ENCODE measurements at regions of chr6 and their contacts with region 1.

Region 1: DNA sequence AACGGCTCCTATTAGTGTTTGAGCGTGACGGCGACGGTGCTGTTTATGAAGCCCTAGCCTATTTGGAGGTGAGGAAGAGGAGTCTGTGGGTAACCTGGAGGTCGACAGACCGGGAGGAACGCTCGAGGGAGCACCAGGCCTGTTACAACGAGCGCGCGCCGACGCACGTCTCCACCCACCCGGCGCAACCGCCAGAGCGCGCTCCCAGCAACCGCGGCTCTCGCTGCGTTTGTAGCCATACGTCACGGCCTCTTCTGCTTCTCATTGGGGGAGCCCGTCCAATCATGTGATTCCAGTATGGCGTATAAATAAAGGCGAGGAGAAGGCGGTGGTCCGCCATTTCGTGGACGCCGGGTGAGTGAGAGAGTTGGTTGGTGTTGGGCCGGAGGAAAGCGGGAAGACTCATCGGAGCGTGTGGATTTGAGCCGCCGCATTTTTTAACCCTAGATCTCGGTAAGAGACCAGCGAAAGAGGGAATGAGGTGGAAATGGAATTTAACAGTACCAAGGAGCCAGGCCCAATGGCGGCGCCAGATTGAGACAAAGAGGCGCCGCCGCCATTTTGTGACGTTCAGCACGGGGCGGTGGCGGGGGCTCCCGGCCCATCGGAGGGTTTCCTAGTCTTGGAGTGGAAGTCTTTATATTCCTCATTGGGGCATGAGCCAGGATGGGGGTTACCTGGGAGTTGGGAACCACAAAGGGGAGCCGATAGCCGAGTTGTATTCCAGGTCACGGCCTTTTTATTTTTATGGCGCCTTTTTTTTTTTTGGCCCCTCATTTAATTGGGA is at the start of gene SRSF3:
- DNase-seq: peak; percentile 96
- H3K4me3 Mint-ChIP-seq: peak within 1 kb of the TSS; percentile 96
- H3K27ac Mint-ChIP-seq: peak within 1 kb of the TSS; percentile 99
- H3K4me1 Mint-ChIP-seq: peaks cover 26% of the 10 kb centered on the region
- H3K27me3 Mint-ChIP-seq: no peaks in the 10 kb centered on the region
- total RNA-seq, gene SRSF3: 512 and 541 TPM in 2 replicates

Region 2: DNA sequence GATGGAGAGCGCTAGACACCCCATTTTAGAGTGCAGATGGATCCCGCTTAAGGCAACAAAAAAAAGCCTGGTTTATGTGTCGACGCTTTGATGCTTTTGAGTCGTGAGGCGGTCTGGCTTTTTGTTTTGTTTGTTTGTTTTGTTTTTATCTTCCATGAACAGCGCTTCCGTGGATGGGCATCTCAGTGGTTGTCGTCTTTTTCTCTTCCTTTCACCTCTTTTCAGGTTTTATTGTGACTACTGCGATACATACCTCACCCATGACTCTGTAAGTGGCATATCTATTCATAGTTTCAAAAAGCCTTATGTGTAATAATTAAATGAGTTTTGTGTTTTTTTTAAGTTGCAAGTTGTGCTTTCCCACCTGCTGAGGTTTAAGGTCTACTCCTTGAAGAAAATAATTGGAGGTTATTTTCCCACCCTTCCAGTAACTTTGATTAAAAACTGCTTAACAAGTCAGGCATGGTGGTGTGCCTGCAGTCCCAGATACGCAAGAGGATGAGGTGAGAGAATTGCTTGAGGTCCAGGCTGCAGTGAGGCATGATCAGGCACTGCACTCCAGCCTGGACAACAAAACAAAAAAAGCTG is 1836.4 kb before region 1 on chr6:
- intact Hi-C with region 1: loop called (anchors 10 kb)
- DNase-seq: no peak
- H3K4me3 Mint-ChIP-seq: no peak overlapping the region
- H3K27ac Mint-ChIP-seq: no peak overlapping the region
- H3K4me1 Mint-ChIP-seq: peaks cover 8% of the 10 kb centered on the region
- H3K27me3 Mint-ChIP-seq: no peaks in the 10 kb centered on the region

Region 3: GRCh38 chr6:36423101-36423824 is 171.0 kb before region 1 on chr6:
- intact Hi-C with region 1: loop called (anchors 5 kb)
- DNase-seq: peak; percentile 97
- H3K4me3 Mint-ChIP-seq: peak overlapping the region; percentile 88
- H3K27ac Mint-ChIP-seq: peak overlapping the region; percentile 85
- H3K4me1 Mint-ChIP-seq: peaks cover 15% of the 10 kb centered on the region
- H3K27me3 Mint-ChIP-seq: peaks cover 7% of the 10 kb centered on the region

Region 4: DNA sequence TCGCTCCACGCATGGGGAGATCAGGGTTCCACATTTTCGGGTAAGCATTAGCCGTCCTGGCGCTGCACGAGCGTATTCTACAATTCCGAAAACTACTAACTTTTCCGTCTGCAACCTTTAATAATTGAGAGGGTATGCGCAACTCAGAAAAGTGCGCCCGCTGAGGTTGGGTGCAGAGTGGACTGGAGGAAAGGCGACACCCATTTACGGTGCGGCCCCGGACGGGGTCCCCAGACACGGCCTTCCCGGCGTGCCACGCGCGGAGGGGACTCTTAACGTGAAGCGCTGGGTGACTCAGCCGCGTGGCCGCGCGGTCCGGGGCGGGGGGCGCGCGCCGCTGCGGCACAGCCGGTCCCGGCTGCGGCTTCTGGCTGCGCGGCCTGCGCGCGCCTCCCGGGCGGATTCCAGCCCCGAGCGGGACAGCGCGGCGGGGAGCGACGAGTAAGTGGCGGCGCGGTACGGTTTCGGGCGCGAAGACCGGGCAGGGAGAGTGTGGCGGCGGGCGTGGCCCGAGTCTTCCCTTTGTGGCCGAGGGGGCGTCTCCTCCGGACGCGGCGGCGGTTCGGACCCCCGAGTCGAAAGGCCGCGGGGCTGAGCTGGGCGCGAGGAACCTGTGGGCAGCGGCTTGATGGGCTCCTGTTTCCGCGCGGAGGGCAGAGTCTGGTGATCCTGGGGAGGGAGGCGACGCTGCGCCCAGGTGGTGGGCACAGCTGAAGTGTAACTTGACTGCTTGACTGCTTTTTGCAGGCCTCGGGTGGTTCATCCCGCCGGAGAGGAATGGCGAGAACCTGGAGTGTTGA is 151.4 kb before region 1 on chr6 and contains the starts of genes KCTD20 and PXT1:
- intact Hi-C with region 1: loop called (anchors 2 kb)
- DNase-seq: peak; percentile 84
- H3K4me3 Mint-ChIP-seq: peak within 1 kb of the TSS; percentile 93
- H3K27ac Mint-ChIP-seq: peak within 1 kb of the TSS; percentile 97
- H3K4me1 Mint-ChIP-seq: peaks cover 30% of the 10 kb centered on the region
- H3K27me3 Mint-ChIP-seq: no peaks in the 10 kb centered on the region
- total RNA-seq, gene KCTD20: 51.1 and 54.8 TPM in 2 replicates
- total RNA-seq, gene PXT1: 0.14 and 0.27 TPM in 2 replicates

Region 5: GRCh38 chr6:36546920-36547645 is 47.1 kb before region 1 on chr6 and contains the start of gene STK38:
- intact Hi-C with region 1: loop called (anchors 1 kb)
- DNase-seq: peak; percentile 85
- H3K4me3 Mint-ChIP-seq: peak within 1 kb of the TSS; percentile 98
- H3K27ac Mint-ChIP-seq: peak within 1 kb of the TSS; percentile 95
- H3K4me1 Mint-ChIP-seq: peaks cover 33% of the 10 kb centered on the region
- H3K27me3 Mint-ChIP-seq: no peaks in the 10 kb centered on the region
- total RNA-seq, gene STK38: 22.9 and 25.0 TPM in 2 replicates

Measured in activated T-helper 2 cell treated with anti-CD3 and anti-CD28 coated beads, Interferon-gamma antibody, Interleukin-2, Interleukin-4, amounts not matched to agents 10 μg/mL and 5 μg/mL and 100 μg/mL, durations not matched to agents 14 hours and 24 hours and 36 hours (primary cell).